ENCODE measurements at regions of chr3 and their contacts with region 1.

Region 1: DNA sequence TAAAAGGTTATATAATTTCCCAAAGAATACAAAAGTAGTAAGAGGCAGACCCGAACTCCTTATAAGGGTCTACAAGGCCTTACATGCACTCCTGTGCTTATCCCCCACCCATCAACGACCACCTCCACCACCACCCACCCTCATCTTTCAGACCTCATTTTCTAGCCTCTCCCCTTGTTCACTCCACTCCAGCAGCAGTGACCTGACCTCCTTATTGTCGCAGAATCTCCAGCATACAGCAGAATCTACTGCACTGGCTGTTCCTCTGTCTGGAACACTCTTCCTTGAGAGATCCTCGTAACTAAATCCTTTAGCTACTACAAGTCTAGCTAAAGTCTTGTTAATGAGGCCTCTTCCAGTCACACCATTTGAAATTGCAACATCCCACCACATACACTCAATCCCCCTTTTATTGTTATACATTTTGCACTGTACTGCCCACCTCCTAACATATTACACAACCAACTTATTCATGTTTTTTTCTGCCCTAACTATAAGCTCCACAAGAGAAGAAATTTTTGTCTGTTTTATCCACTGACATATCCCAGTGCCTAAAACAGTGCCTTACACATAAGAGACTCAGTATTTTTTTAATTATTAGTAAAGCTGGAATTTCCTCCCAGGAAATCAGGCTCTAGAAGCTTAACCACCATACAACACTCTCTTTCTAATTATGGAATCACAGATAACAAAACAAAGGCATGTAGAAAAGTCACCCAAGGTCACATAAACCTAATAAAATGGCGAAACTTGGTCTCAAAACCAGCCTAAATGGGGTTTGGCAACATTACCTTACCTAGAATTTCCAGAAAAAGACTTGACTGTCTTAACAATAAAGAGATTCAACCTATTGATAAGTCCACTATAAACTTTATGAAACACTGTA is 40.2 kb downstream of the ZNF148 start:
- DNase-seq: no peak
- ATAC-seq: no peak
- H3K4me3 ChIP-seq: no peak overlapping the region
- H3K27ac ChIP-seq: no peak overlapping the region; the same call in 1 of the 2 replicates
- H3K4me1 ChIP-seq: peaks cover 34% of the 10 kb centered on the region; the same call in 1 of the 2 replicates
- H3K27me3 ChIP-seq: no peaks in the 10 kb centered on the region
- CTCF ChIP-seq: no peak

Region 2: GRCh38 chr3:125107861-125108567 is 226.9 kb before region 1 on chr3:
- CTCF ChIA-PET with region 1: no interaction called
- POLR2A ChIA-PET with region 1: no interaction called
- in situ Hi-C with region 1: no loop called
- intact Hi-C with region 1: no loop called
- DNase-seq: no peak
- ATAC-seq: peak; percentile 45
- H3K4me3 ChIP-seq: no peak overlapping the region
- H3K27ac ChIP-seq: peak overlapping the region; percentile 67; the same call in 1 of the 2 replicates
- H3K4me1 ChIP-seq: peaks cover 23% of the 10 kb centered on the region
- H3K27me3 ChIP-seq: no peaks in the 10 kb centered on the region
- CTCF ChIP-seq: no peak

Region 3: DNA sequence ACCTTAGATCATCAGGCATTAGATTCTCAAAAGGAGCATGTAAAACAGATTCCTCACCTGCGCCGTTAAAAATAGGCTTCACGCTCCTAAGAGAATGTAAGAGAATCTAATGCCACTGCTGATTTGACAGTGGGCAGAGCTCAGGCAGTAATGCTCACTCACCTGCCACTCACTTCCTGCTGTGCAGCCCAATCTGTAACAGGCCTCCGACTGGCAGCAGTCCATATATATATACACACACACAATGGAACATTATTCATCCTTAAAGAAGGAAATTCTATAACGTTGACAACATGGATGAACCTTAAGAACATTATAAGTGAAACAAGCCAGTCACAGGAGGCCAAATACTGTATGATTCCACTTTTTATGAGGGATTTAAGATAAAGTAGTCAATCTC is 15.7 kb after region 1 on chr3:
- CTCF ChIA-PET with region 1: no interaction called
- POLR2A ChIA-PET with region 1: interaction called, 14 read pairs
- in situ Hi-C with region 1: no loop called
- intact Hi-C with region 1: no loop called
- DNase-seq: no peak
- ATAC-seq: no peak
- H3K4me3 ChIP-seq: no peak overlapping the region
- H3K27ac ChIP-seq: no peak overlapping the region
- H3K4me1 ChIP-seq: no peaks in the 10 kb centered on the region; the same call in 1 of the 2 replicates
- H3K27me3 ChIP-seq: no peaks in the 10 kb centered on the region
- CTCF ChIP-seq: no peak